PC-9 (cell line): ENCODE measurements at regions of chr19 and their contacts with region 1.

Region 1: DNA sequence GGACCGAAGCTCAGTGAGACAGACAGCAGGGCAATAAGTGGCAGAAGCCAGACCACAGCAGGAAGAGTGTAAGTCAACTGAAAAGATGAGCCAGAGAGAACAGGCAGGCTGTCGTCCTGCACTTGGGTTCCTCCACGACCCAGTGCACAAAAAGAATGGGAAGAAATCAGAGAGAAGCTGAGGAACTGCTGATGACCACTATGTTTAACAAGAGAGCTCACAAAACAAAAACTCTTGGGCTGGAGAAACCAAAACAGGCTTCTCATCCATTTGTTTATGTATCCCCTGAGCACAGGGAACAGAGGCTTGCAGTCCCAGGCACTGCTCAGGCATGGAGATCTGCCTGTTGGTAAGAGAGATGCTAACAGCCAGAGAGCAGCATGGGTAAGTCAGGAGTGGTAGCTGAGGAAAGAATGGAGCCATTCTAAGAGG is 14.0 kb downstream of the AKAP8L start:
- DNase-seq: no peak
- H3K4me3 ChIP-seq: no peak overlapping the region
- H3K27ac ChIP-seq: no peak overlapping the region
- H3K4me1 ChIP-seq: no peaks in the 10 kb centered on the region
- H3K27me3 ChIP-seq: no peaks in the 10 kb centered on the region
- CTCF ChIP-seq: no peak

Region 2: GRCh38 chr19:15340086-15340485 is 64.7 kb before region 1 on chr19:
- CTCF ChIA-PET with region 1: no interaction called
- POLR2A ChIA-PET with region 1: interaction called, 12 read pairs
- intact Hi-C with region 1: no loop called
- DNase-seq: no peak
- H3K4me3 ChIP-seq: no peak overlapping the region
- H3K27ac ChIP-seq: no peak overlapping the region
- H3K4me1 ChIP-seq: no peaks in the 10 kb centered on the region
- H3K27me3 ChIP-seq: no peaks in the 10 kb centered on the region
- CTCF ChIP-seq: no peak